Mammary epithelial cell (primary cell): ENCODE measurements at regions of chr12 and their contacts with region 1.

Region 1: GRCh38 chr12:6752921-6753771 is at the start of gene MLF2:
- DNase-seq: peak; percentile 98
- H3K4me3 ChIP-seq: peak within 1 kb of the TSS; percentile 49 to 99 (median 81)
- H3K27ac ChIP-seq: peak within 1 kb of the TSS; percentile 92
- H3K4me1 ChIP-seq: peaks cover 24% of the 10 kb centered on the region
- H3K27me3 ChIP-seq: no peaks in the 10 kb centered on the region
- CTCF ChIP-seq: peak; percentile 82 to 97
- total RNA-seq, gene MLF2: 233 to 294 TPM

Region 2: GRCh38 chr12:6092784-6093722 is 660.1 kb before region 1 on chr12:
- CTCF ChIA-PET with region 1: no interaction called
- dilution Hi-C with region 1: no loop called
- in situ Hi-C with region 1: no loop called
- intact Hi-C with region 1: no loop called
- DNase-seq: peak; percentile 95
- H3K4me3 ChIP-seq: no peak overlapping the region
- H3K27ac ChIP-seq: peak overlapping the region; percentile 65
- H3K4me1 ChIP-seq: peaks cover 52% of the 10 kb centered on the region
- H3K27me3 ChIP-seq: no peaks in the 10 kb centered on the region
- CTCF ChIP-seq: peak in 1 of 2 donors; percentile 17

Region 3: GRCh38 chr12:6613776-6614512 is 139.2 kb before region 1 on chr12:
- CTCF ChIA-PET with region 1: no interaction called
- dilution Hi-C with region 1: no loop called
- in situ Hi-C with region 1: no loop called
- intact Hi-C with region 1: loop called (anchors 1 kb)
- DNase-seq: peak; percentile 65
- H3K4me3 ChIP-seq: no peak overlapping the region
- H3K27ac ChIP-seq: no peak overlapping the region
- H3K4me1 ChIP-seq: peaks cover 17% of the 10 kb centered on the region
- H3K27me3 ChIP-seq: no peaks in the 10 kb centered on the region
- CTCF ChIP-seq: no peak

Region 4: DNA sequence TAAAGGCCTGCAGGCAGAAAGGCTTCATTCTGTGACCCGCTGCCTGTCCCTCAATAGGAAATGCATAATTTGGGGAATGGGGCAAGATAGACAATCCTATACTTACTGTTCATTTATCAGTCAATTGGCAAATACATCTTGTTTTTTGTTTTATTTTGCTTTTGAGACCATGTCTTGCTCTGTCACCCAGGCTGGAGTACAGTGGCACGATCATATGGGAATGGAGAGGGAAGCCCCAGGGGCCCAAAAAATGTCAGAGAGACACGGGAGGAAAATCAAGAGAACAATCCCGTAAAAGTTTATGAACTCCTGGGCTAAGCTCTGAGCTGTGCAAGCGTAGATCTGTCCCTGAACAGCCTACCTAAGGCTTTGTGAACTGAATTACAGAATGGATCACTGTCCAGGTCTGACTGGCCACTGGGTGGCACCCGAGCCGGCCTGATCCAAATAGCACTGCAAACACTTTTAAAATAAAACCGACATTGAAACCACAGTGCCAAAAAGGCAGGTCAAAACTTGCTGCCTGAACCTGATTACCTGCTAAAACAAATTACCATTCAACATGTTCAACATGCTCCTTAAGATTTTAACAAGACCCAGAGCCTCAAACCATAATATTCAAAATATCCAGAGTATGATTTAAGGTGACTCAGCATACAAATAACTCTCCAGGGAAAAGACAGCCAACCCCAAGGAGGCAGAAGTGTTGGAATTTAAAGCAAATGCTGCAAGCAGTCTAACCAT is 17.5 kb before region 1 on chr12:
- CTCF ChIA-PET with region 1: interaction called, 6 read pairs
- dilution Hi-C with region 1: no loop called
- in situ Hi-C with region 1: no loop called
- intact Hi-C with region 1: loop called (anchors 1 kb)
- DNase-seq: peak; percentile 97
- H3K4me3 ChIP-seq: no peak overlapping the region
- H3K27ac ChIP-seq: peak overlapping the region; percentile 7
- H3K4me1 ChIP-seq: peaks cover 13% of the 10 kb centered on the region
- H3K27me3 ChIP-seq: no peaks in the 10 kb centered on the region
- CTCF ChIP-seq: peak; percentile 76 to 81

Region 5: GRCh38 chr12:6778574-6779550 is 25.7 kb after region 1 on chr12:
- CTCF ChIA-PET with region 1: no interaction called
- dilution Hi-C with region 1: no loop called
- in situ Hi-C with region 1: no loop called
- intact Hi-C with region 1: loop called (anchors 1 kb)
- DNase-seq: peak; percentile 82
- H3K4me3 ChIP-seq: peak overlapping the region in 2 of 3 experiments; percentile 25 to 31
- H3K27ac ChIP-seq: no peak overlapping the region
- H3K4me1 ChIP-seq: peaks cover 7% of the 10 kb centered on the region
- H3K27me3 ChIP-seq: no peaks in the 10 kb centered on the region
- CTCF ChIP-seq: peak; percentile 81 to 97

Region 6: GRCh38 chr12:6944381-6945186 is 191.4 kb after region 1 on chr12:
- CTCF ChIA-PET with region 1: no interaction called
- dilution Hi-C with region 1: no loop called
- in situ Hi-C with region 1: no loop called
- intact Hi-C with region 1: loop called (anchors 5 kb)
- DNase-seq: no peak
- H3K4me3 ChIP-seq: peak overlapping the region; percentile 36 to 64 (median 47)
- H3K27ac ChIP-seq: peak overlapping the region; percentile 94
- H3K4me1 ChIP-seq: peaks cover 29% of the 10 kb centered on the region
- H3K27me3 ChIP-seq: no peaks in the 10 kb centered on the region
- CTCF ChIP-seq: peak; percentile 55 to 77

Region 7: GRCh38 chr12:7265243-7265642 is 512.1 kb after region 1 on chr12:
- CTCF ChIA-PET with region 1: no interaction called
- dilution Hi-C with region 1: no loop called
- in situ Hi-C with region 1: no loop called
- intact Hi-C with region 1: no loop called
- DNase-seq: peak; percentile 59
- H3K4me3 ChIP-seq: no peak overlapping the region
- H3K27ac ChIP-seq: peak overlapping the region; percentile 3
- H3K4me1 ChIP-seq: no peaks in the 10 kb centered on the region
- H3K27me3 ChIP-seq: no peaks in the 10 kb centered on the region
- CTCF ChIP-seq: no peak